A549 (cell line): ENCODE measurements at regions of chr13 and their contacts with region 1.

Region 1: DNA sequence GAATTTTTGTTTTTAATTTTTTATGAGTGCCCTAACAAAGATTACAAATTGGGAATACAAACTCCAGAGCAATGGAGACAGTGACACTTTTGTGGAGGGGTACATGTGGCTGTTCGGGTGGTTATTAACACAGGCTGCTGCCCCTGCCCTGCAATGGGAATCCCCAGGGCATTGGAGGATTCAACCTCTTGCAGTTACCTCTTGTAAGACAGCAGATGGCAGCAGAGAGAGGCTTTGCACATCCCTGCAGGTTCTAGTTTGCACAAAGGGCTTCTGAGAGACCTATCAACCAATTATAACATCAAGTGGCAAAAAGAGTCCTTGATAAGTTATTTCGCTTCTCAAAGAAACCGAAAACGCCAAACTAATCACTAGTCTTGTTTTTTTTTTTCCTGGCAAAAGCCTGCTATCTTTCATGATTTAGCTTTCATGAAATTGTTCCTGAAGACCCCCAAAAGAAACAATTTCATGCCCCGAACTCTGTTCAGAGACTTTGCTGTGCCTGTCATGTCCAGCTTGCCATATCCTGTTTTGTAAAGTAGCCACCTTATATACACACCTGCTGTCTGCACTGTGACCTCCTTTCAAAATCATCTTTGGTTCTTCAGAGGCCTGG is 10.4 kb downstream of the GJB2 start:
- DNase-seq: peak; percentile 58 to 71
- ATAC-seq: peak; percentile 93 to 96
- H3K4me3 ChIP-seq: no peak overlapping the region
- H3K27ac ChIP-seq: no peak overlapping the region
- H3K4me1 ChIP-seq: no peaks in the 10 kb centered on the region
- CTCF ChIP-seq: peak; percentile 67
- EP300 ChIP-seq: no peak
- POLR2A ChIP-seq: no peak
- RAD21 ChIP-seq: peak; percentile 60 to 67; a peak in 4 of 5 replicates

Region 2: DNA sequence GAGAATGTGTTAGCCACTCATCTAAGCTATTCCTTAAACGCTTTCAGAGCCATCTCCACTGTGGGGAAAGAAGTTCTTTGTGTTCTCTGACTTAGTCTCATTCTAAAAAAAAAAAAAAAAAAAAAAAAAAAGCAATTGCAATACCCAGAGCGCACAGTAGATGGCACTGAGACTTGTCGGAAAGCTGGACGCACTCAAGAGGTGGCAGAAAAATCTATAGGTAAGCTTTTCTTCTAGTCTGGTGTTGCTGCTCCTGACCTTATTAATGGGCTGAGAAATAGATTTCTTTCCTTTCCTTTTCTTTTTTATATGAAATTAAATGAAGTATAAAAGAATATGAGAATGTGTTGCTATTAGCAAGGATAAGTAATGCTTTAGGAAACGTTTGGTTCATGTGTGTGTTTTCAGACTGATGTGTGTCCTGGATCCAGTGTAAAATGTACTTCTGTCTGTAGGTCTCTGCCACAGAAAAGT is 15.1 kb after region 1 on chr13:
- CTCF ChIA-PET with region 1: interaction called, 24 read pairs
- POLR2A ChIA-PET with region 1: no interaction called
- DNase-seq: peak; percentile 31
- ATAC-seq: peak in 1 of 2 experiments; percentile 51; a peak in 3 of 6 replicates
- H3K4me3 ChIP-seq: no peak overlapping the region
- H3K27ac ChIP-seq: no peak overlapping the region
- H3K4me1 ChIP-seq: peaks cover 11% of the 10 kb centered on the region; the same call in 2 of the 3 replicates
- CTCF ChIP-seq: peak; percentile 60
- EP300 ChIP-seq: no peak
- POLR2A ChIP-seq: no peak
- RAD21 ChIP-seq: peak; percentile 52 to 55; a peak in 4 of 5 replicates

Region 3: DNA sequence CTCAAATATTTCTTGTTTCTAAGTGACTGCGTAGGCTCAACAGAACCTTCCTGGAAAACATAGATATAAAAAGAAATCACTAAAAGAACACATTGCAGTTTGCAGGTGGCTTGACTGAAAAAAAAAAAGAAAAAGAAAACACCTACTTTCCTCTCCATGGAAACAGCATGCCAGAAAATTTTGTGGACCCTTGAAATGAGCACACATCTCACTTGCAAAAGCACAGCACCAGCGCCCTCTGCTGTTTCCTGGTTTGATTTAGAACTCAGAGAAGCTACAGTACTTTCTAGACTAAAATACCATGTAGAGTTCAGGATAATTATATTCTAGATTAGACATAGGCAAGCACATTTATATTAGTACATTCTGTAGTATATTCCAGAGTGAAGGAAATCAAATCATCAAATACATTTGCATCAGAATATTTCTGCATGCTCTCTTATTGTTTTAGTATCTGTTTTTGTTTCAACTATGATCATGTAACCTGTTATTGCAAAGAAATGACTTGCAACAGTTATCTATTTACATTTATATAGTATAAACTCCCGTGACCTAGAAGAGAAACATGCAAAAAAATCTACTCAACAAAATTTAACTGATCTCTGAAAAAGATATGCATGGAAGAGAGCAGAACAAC is 742.5 kb after region 1 on chr13:
- CTCF ChIA-PET with region 1: interaction called, 16 read pairs
- POLR2A ChIA-PET with region 1: no interaction called
- DNase-seq: peak; percentile 10 to 77
- ATAC-seq: peak; percentile 66 to 84; a peak in 4 of 6 replicates
- H3K4me3 ChIP-seq: no peak overlapping the region
- H3K27ac ChIP-seq: no peak overlapping the region
- H3K4me1 ChIP-seq: no peaks in the 10 kb centered on the region
- CTCF ChIP-seq: peak; percentile 71
- EP300 ChIP-seq: no peak
- POLR2A ChIP-seq: no peak
- RAD21 ChIP-seq: peak; percentile 74 to 79